K562 (cell line): ENCODE measurements at regions of chr17 and their contacts with region 1.

Region 1: GRCh38 chr17:27236717-27237315 is 57.1 kb upstream of the WSB1 start:
- DNase-seq: peak; percentile 69 to 80 (median 74)
- ATAC-seq: peak; percentile 81
- H3K4me3 ChIP-seq: no peak overlapping the region
- H3K27ac ChIP-seq: no peak overlapping the region
- H3K4me1 ChIP-seq: peaks cover 0 to 4% of the 10 kb centered on the region in 2 experiments; a peak in 2 of 5 replicates
- H3K27me3 ChIP-seq: no peaks in the 10 kb centered on the region
- CTCF ChIP-seq: peak; percentile 79 to 91 (median 84)
- EP300 ChIP-seq: no peak
- POLR2A ChIP-seq: no peak
- RAD21 ChIP-seq: peak; percentile 91 to 93

Region 2: GRCh38 chr17:27072885-27073284 is 163.9 kb before region 1 on chr17:
- CTCF ChIA-PET with region 1: no interaction called
- POLR2A ChIA-PET with region 1: no interaction called
- in situ Hi-C with region 1: no loop called
- intact Hi-C with region 1: no loop called
- DNase-seq: no peak
- ATAC-seq: no peak
- H3K4me3 ChIP-seq: no peak overlapping the region
- H3K27ac ChIP-seq: no peak overlapping the region
- H3K4me1 ChIP-seq: no peaks in the 10 kb centered on the region; a peak in 1 of 5 replicates
- H3K27me3 ChIP-seq: no peaks in the 10 kb centered on the region
- CTCF ChIP-seq: no peak
- EP300 ChIP-seq: no peak
- POLR2A ChIP-seq: no peak
- RAD21 ChIP-seq: no peak

Region 3: DNA sequence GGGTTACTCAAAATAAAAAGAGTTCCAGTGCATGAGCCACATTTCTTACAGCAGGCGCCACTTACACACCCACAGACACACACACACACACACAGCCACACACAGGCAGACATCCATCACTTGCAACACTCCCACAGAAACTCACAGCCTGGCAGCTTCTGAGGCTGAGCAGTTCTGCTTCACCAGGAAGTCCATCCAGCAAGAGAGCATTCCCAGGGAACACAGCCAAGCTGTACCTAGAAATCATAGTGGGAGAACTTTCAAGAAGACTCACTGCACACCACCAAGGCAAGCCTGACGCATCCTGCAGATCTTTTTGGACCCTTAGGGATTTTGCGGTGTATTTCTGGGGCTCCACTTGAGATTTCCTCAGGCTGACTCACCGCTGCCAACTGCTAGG is 83.8 kb before region 1 on chr17:
- CTCF ChIA-PET with region 1: no interaction called
- POLR2A ChIA-PET with region 1: no interaction called
- in situ Hi-C with region 1: no loop called
- intact Hi-C with region 1: no loop called
- DNase-seq: peak in 1 of 4 experiments; percentile 4
- ATAC-seq: no peak
- H3K4me3 ChIP-seq: no peak overlapping the region
- H3K27ac ChIP-seq: no peak overlapping the region
- H3K4me1 ChIP-seq: no peaks in the 10 kb centered on the region
- H3K27me3 ChIP-seq: no peaks in the 10 kb centered on the region
- CTCF ChIP-seq: no peak
- EP300 ChIP-seq: no peak
- POLR2A ChIP-seq: no peak
- RAD21 ChIP-seq: no peak

Region 4: DNA sequence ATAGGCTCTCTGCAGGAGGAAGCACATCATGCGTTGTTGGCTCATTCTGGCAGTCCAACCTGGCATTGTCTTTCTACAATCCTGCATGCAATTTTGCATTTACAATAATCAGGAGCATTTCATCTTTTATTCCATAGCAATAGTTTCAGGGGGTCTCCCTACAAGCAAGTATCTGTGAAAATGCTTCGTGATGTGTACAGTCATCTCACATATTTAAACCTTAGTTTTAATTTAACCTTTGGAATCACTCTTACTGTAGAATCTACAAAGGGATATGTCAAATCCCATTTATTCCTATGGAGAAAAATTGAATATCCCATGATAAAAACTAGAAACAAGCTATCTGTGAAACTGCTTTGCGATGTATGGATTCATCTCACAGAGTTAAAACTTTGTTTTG is 54.9 kb before region 1 on chr17:
- CTCF ChIA-PET with region 1: no interaction called
- POLR2A ChIA-PET with region 1: no interaction called
- in situ Hi-C with region 1: no loop called
- intact Hi-C with region 1: loop called (anchors 5 kb)
- DNase-seq: no peak
- ATAC-seq: no peak
- H3K4me3 ChIP-seq: no peak overlapping the region
- H3K27ac ChIP-seq: no peak overlapping the region
- H3K4me1 ChIP-seq: no peaks in the 10 kb centered on the region
- H3K27me3 ChIP-seq: no peaks in the 10 kb centered on the region
- CTCF ChIP-seq: no peak
- EP300 ChIP-seq: no peak
- POLR2A ChIP-seq: no peak
- RAD21 ChIP-seq: no peak

Region 5: GRCh38 chr17:27332485-27333409 is 95.9 kb after region 1 on chr17:
- CTCF ChIA-PET with region 1: interaction called, 17 read pairs
- POLR2A ChIA-PET with region 1: interaction called, 7 read pairs
- in situ Hi-C with region 1: loop called (anchors 5 kb)
- intact Hi-C with region 1: no loop called
- DNase-seq: peak; percentile 92 to 99 (median 94)
- ATAC-seq: peak; percentile 97
- H3K4me3 ChIP-seq: peak overlapping the region; percentile 39
- H3K27ac ChIP-seq: peak overlapping the region; percentile 88
- H3K4me1 ChIP-seq: peaks cover 22 to 31% of the 10 kb centered on the region in 2 experiments; a peak in 4 of 5 replicates
- H3K27me3 ChIP-seq: no peaks in the 10 kb centered on the region
- CTCF ChIP-seq: peak; percentile 90 to 96 (median 95)
- EP300 ChIP-seq: peak; percentile 28; the same call in 1 of the 2 replicates
- POLR2A ChIP-seq: peak; percentile 72
- RAD21 ChIP-seq: peak; percentile 98 to 99

Region 6: GRCh38 chr17:27747462-27748359 is 510.9 kb after region 1 on chr17:
- CTCF ChIA-PET with region 1: no interaction called
- POLR2A ChIA-PET with region 1: interaction called, 3 read pairs
- in situ Hi-C with region 1: loop called (anchors 10 kb)
- intact Hi-C with region 1: no loop called
- DNase-seq: peak; percentile 32 to 57 (median 49)
- ATAC-seq: peak; percentile 69
- H3K4me3 ChIP-seq: no peak overlapping the region
- H3K27ac ChIP-seq: no peak overlapping the region
- H3K4me1 ChIP-seq: no peaks in the 10 kb centered on the region; a peak in 1 of 5 replicates
- H3K27me3 ChIP-seq: no peaks in the 10 kb centered on the region; a peak in 1 of 5 replicates
- CTCF ChIP-seq: peak; percentile 56 to 64 (median 58)
- EP300 ChIP-seq: no peak
- POLR2A ChIP-seq: no peak
- RAD21 ChIP-seq: no peak

Region 7: GRCh38 chr17:27760069-27760885 is 523.5 kb after region 1 on chr17:
- CTCF ChIA-PET with region 1: interaction called, 7 read pairs
- POLR2A ChIA-PET with region 1: no interaction called
- in situ Hi-C with region 1: no loop called
- intact Hi-C with region 1: loop called (anchors 5 kb)
- DNase-seq: peak; percentile 63 to 79 (median 70)
- ATAC-seq: peak; percentile 86
- H3K4me3 ChIP-seq: no peak overlapping the region
- H3K27ac ChIP-seq: no peak overlapping the region
- H3K4me1 ChIP-seq: peaks cover 0 to 11% of the 10 kb centered on the region in 2 experiments; a peak in 3 of 5 replicates
- H3K27me3 ChIP-seq: peaks cover 0 to 27% of the 10 kb centered on the region in 2 experiments; a peak in 3 of 5 replicates
- CTCF ChIP-seq: peak; percentile 82 to 95 (median 93)
- EP300 ChIP-seq: no peak
- POLR2A ChIP-seq: no peak
- RAD21 ChIP-seq: peak; percentile 81 to 89